ENCODE measurements at regions of chr10 and their contacts with region 1.

Region 1: GRCh38 chr10:104121520-104122224 is at the start of gene SFR1:
- DNase-seq: peak; percentile 100
- ATAC-seq: peak; percentile 89
- H3K4me3 ChIP-seq: peak within 1 kb of the TSS; percentile 73 to 100 (median 97)
- H3K4me3 Mint-ChIP-seq: peak within 1 kb of the TSS; percentile 96
- H3K27ac ChIP-seq: peak within 1 kb of the TSS; percentile 98 to 99
- H3K27ac Mint-ChIP-seq: peak within 1 kb of the TSS; percentile 99
- H3K4me1 ChIP-seq: peaks cover 10 to 13% of the 10 kb centered on the region in 2 donors
- H3K4me1 Mint-ChIP-seq: peaks cover 19% of the 10 kb centered on the region
- H3K27me3 ChIP-seq: no peaks in the 10 kb centered on the region
- H3K27me3 Mint-ChIP-seq: no peaks in the 10 kb centered on the region
- CTCF ChIP-seq: peak; percentile 70
- total RNA-seq, gene SFR1: 15.1 and 15.3 TPM in 2 replicates

Region 2: GRCh38 chr10:102917962-102918816 is 1203.5 kb before region 1 on chr10 and contains the start of gene CNNM2:
- CTCF ChIA-PET with region 1: no interaction called
- POLR2A ChIA-PET with region 1: no interaction called
- intact Hi-C with region 1: loop called (anchors 5 kb)
- DNase-seq: peak; percentile 100
- ATAC-seq: peak; percentile 90
- H3K4me3 ChIP-seq: peak within 1 kb of the TSS; percentile 60 to 95 (median 93)
- H3K4me3 Mint-ChIP-seq: peak within 1 kb of the TSS; percentile 98
- H3K27ac ChIP-seq: peak within 1 kb of the TSS; percentile 92 to 94
- H3K27ac Mint-ChIP-seq: peak within 1 kb of the TSS; percentile 96
- H3K4me1 ChIP-seq: peaks cover 31 to 33% of the 10 kb centered on the region in 2 donors
- H3K4me1 Mint-ChIP-seq: peaks cover 53% of the 10 kb centered on the region
- H3K27me3 ChIP-seq: peaks cover 0 to 12% (median 6%) of the 10 kb centered on the region in 4 experiments
- H3K27me3 Mint-ChIP-seq: peaks cover 12% of the 10 kb centered on the region
- CTCF ChIP-seq: no peak
- total RNA-seq, gene CNNM2: 20.2 and 21.6 TPM in 2 replicates

Region 3: DNA sequence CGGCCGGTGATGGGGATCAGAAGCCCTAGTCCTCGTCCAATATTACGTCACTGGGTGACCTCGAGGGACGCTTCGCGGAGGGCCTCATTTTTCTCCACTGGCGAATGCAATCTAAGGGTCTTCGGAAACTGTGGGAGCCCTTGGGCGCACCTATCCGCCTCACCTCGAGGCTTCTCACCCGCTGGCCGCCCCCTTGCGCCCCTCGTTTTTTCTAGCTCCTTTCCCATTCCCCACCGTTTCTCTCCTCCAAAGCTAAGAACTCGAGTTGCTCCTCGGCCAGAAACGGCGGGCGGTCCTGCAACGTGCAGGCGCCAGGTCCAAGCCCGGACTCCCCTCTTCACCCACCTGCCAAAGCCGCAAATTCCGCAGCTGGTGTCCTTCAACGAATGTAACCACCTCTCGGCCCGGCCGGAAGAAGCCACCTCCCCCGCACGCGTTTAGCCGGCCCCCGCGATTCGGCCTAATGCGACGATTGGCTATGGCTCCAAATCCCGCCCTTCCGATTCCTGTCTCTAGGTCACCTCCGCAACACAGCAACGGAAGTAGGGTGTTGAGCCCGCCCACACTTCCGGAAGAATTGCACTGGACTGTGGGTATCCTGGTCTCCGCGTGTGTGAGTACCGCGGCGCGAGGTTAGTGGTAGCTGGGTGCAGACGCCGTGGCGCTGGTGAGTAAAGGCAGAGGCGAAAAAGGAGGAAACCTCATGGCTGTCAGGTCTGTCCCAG is 725.4 kb before region 1 on chr10 and contains the starts of genes ATP5MK and PDCD11:
- CTCF ChIA-PET with region 1: no interaction called
- POLR2A ChIA-PET with region 1: no interaction called
- intact Hi-C with region 1: loop called (anchors 5 kb)
- DNase-seq: peak; percentile 95
- ATAC-seq: peak; percentile 98
- H3K4me3 ChIP-seq: peak within 1 kb of the TSS; percentile 68 to 92 (median 76)
- H3K4me3 Mint-ChIP-seq: peak within 1 kb of the TSS; percentile 97
- H3K27ac ChIP-seq: peak within 1 kb of the TSS; percentile 38 to 64
- H3K27ac Mint-ChIP-seq: peak within 1 kb of the TSS; percentile 89
- H3K4me1 ChIP-seq: peaks cover 22 to 23% of the 10 kb centered on the region in 2 donors
- H3K4me1 Mint-ChIP-seq: peaks cover 44% of the 10 kb centered on the region
- H3K27me3 ChIP-seq: no peaks in the 10 kb centered on the region
- H3K27me3 Mint-ChIP-seq: no peaks in the 10 kb centered on the region
- CTCF ChIP-seq: no peak
- total RNA-seq, gene ATP5MK: 96.6 and 107 TPM in 2 replicates
- total RNA-seq, gene PDCD11: 36.4 and 42.3 TPM in 2 replicates

Region 4: GRCh38 chr10:103772096-103772845 is 349.4 kb before region 1 on chr10:
- CTCF ChIA-PET with region 1: no interaction called
- POLR2A ChIA-PET with region 1: no interaction called
- intact Hi-C with region 1: no loop called
- DNase-seq: peak; percentile 60
- ATAC-seq: peak; percentile 80
- H3K4me3 ChIP-seq: peak overlapping the region; percentile 38 to 77 (median 69)
- H3K4me3 Mint-ChIP-seq: peak overlapping the region; percentile 93
- H3K27ac ChIP-seq: peak overlapping the region; percentile 34 to 35
- H3K27ac Mint-ChIP-seq: peak overlapping the region; percentile 75
- H3K4me1 ChIP-seq: peaks cover 43 to 49% of the 10 kb centered on the region in 2 donors
- H3K4me1 Mint-ChIP-seq: peaks cover 45% of the 10 kb centered on the region
- H3K27me3 ChIP-seq: peaks cover 0 to 7% (median 0%) of the 10 kb centered on the region in 4 experiments
- H3K27me3 Mint-ChIP-seq: peaks cover 6% of the 10 kb centered on the region
- CTCF ChIP-seq: no peak

Region 5: GRCh38 chr10:103888113-103888841 is 233.4 kb before region 1 on chr10:
- CTCF ChIA-PET with region 1: interaction called, 10 read pairs
- POLR2A ChIA-PET with region 1: no interaction called
- intact Hi-C with region 1: loop called (anchors 1 kb)
- DNase-seq: peak; percentile 65
- ATAC-seq: peak; percentile 76
- H3K4me3 ChIP-seq: no peak overlapping the region
- H3K4me3 Mint-ChIP-seq: no peak overlapping the region
- H3K27ac ChIP-seq: no peak overlapping the region
- H3K27ac Mint-ChIP-seq: no peak overlapping the region
- H3K4me1 ChIP-seq: no peaks in the 10 kb centered on the region
- H3K4me1 Mint-ChIP-seq: no peaks in the 10 kb centered on the region
- H3K27me3 ChIP-seq: no peaks in the 10 kb centered on the region
- H3K27me3 Mint-ChIP-seq: no peaks in the 10 kb centered on the region
- CTCF ChIP-seq: peak; percentile 88

Region 6: DNA sequence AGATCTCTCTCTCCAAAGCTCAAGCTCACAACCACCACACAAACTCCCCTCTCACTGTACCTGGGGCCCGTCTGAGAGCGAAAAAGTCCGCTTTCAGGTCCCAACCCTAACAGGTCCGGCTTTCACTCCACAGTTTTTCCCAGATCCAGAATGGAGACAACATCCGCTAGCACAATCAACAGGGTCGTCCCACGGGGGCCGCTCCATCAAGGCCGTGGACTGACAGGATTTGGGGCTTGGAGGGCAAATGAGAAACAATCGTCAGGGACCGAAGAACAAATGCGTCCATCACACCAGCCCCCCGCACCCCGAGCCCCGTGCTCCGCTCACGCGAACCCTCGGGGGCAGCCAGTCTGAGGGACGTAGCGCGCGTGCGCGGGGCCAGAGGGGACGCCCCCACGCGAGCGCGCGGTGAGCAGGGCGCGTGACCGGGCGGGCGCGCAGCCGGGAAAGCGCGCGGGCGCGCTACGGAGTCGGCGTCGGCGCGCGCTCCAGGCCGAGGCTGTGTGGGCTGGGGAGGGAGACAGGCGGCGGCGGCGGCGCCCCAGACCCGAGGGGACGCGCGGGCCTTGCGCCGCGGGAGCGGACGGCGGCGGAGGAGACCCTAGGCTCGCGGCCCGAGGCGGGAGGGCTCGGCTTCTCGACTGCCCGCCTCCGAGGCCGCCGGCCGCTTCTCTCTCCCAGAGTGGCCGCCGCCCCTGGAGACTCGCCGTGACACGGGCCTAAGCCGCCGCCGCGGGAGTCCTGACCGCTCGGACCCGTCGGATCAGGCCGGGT is 154.8 kb before region 1 on chr10 and contains the start of gene SLK:
- CTCF ChIA-PET with region 1: interaction called, 14 read pairs
- POLR2A ChIA-PET with region 1: interaction called, 12 read pairs
- intact Hi-C with region 1: loop called (anchors 1 kb)
- DNase-seq: peak; percentile 94
- ATAC-seq: peak; percentile 87
- H3K4me3 ChIP-seq: peak within 1 kb of the TSS; percentile 88 to 99 (median 95)
- H3K4me3 Mint-ChIP-seq: peak within 1 kb of the TSS; percentile 97
- H3K27ac ChIP-seq: peak within 1 kb of the TSS; percentile 81 to 88
- H3K27ac Mint-ChIP-seq: peak within 1 kb of the TSS; percentile 86
- H3K4me1 ChIP-seq: peaks cover 21 to 25% of the 10 kb centered on the region in 2 donors
- H3K4me1 Mint-ChIP-seq: peaks cover 32% of the 10 kb centered on the region
- H3K27me3 ChIP-seq: no peaks in the 10 kb centered on the region
- H3K27me3 Mint-ChIP-seq: no peaks in the 10 kb centered on the region
- CTCF ChIP-seq: no peak
- total RNA-seq, gene SLK: 22.6 and 24.5 TPM in 2 replicates

Region 7: GRCh38 chr10:104101902-104102301 is 19.8 kb before region 1 on chr10:
- CTCF ChIA-PET with region 1: no interaction called
- POLR2A ChIA-PET with region 1: no interaction called
- intact Hi-C with region 1: no loop called
- DNase-seq: no peak
- ATAC-seq: no peak
- H3K4me3 ChIP-seq: no peak overlapping the region
- H3K4me3 Mint-ChIP-seq: no peak overlapping the region
- H3K27ac ChIP-seq: no peak overlapping the region
- H3K27ac Mint-ChIP-seq: no peak overlapping the region
- H3K4me1 ChIP-seq: no peaks in the 10 kb centered on the region
- H3K4me1 Mint-ChIP-seq: no peaks in the 10 kb centered on the region
- H3K27me3 ChIP-seq: peaks cover 0 to 3% (median 0%) of the 10 kb centered on the region in 4 experiments
- H3K27me3 Mint-ChIP-seq: no peaks in the 10 kb centered on the region
- CTCF ChIP-seq: no peak

Region 8: DNA sequence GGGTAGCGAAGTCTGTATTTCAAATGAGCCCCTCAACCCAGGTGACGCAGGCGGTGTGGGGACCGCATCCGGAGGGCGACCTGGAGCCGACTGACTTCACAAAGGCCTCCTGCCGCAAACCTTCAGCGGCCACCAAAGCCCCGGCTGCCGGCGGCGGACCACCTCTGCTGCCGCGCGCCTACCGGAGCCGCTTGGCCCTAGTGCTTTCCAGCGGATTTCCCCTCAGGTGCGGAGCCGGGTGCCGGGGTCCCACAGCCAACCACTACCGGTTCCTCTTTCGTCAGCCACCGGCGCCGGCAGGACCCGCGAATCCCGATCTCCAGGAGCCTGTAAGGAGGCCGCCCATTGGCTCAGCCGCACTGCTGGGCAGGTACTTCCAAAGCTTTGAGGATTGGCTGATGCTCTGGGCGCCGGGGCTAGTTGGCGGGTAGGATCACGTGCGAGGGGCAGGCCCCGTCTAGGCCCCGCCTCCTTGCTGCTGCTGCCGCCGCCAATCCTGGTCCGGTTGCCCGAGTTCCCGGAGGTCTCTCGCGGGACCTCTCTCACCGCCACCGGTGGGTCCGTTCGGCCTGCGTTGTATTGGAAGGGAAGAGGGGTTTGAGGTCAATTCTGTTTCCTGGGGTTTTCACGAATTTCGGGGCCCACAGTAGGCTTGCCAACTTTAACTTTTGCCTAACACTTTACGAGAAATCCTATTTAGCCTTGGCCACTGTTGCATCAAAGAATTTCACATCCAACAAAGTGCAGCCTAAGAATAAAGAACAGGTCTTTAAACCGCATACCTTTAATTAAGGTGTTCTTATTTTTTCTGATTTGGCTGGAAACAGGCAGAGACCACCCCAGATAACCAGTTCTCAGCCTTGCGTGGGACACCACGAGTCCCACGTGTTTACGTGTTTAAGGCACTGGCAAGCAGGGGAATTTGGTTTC is 147.3 kb after region 1 on chr10 and contains the start of gene GSTO2:
- CTCF ChIA-PET with region 1: interaction called, 3 read pairs
- POLR2A ChIA-PET with region 1: no interaction called
- intact Hi-C with region 1: loop called (anchors 1 kb)
- DNase-seq: peak; percentile 99
- ATAC-seq: peak; percentile 97
- H3K4me3 ChIP-seq: peak within 1 kb of the TSS; percentile 68 to 90 (median 86)
- H3K4me3 Mint-ChIP-seq: peak within 1 kb of the TSS; percentile 88
- H3K27ac ChIP-seq: peak within 1 kb of the TSS; percentile 90 to 95
- H3K27ac Mint-ChIP-seq: peak within 1 kb of the TSS; percentile 92
- H3K4me1 ChIP-seq: peaks cover 20 to 22% of the 10 kb centered on the region in 2 donors
- H3K4me1 Mint-ChIP-seq: peaks cover 37% of the 10 kb centered on the region
- H3K27me3 ChIP-seq: peaks cover 0 to 1% (median under 1%) of the 10 kb centered on the region in 4 experiments
- H3K27me3 Mint-ChIP-seq: no peaks in the 10 kb centered on the region
- CTCF ChIP-seq: no peak
- total RNA-seq, gene GSTO2: 0.89 and 1.4 TPM in 2 replicates

Region 9: DNA sequence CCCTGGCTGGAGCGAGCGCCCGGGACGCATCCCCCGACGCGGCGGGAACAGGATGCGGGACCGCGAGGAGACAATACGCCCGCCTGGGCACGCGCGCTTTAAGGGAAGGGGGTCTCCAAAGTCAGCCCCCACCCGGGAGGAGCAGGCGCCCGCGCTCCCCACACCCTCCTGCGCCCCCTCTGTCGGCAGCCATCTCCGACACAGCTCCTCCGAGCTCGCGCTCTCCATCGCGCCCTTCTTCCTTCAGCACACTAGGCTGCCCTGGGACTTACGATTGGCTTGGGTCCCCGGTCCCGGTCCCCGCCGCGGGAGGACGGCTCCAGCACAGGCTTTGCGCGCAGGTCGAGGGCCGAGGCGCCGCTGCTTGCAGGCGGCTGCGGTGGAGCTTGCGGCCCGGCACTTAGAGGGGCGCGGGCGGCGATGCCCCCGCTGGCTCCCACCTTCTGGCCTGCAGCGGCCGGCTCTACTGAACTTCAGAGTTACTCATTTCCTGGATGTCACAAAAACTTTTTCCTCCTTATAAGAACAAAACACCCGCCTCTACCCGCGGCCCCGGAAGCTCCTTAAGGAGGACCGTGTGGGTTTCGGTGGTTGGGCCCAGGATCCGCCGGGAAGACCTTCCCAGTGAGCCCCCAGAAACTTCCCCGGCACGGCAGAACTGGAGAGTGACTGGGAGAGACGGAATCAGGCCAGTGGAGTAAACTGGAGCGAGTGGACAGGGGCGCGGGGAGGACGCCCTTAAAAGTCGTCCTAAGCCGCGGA is 216.5 kb after region 1 on chr10 and contains the start of gene ITPRIP:
- CTCF ChIA-PET with region 1: interaction called, 6 read pairs
- POLR2A ChIA-PET with region 1: interaction called, 3 read pairs
- intact Hi-C with region 1: loop called (anchors 5 kb)
- DNase-seq: peak; percentile 87
- ATAC-seq: peak; percentile 75
- H3K4me3 ChIP-seq: peak within 1 kb of the TSS; percentile 94 to 98 (median 97)
- H3K4me3 Mint-ChIP-seq: peak within 1 kb of the TSS; percentile 100
- H3K27ac ChIP-seq: peak within 1 kb of the TSS; percentile 80 to 83
- H3K27ac Mint-ChIP-seq: peak within 1 kb of the TSS; percentile 100
- H3K4me1 ChIP-seq: peaks cover 34 to 54% of the 10 kb centered on the region in 2 donors
- H3K4me1 Mint-ChIP-seq: peaks cover 53% of the 10 kb centered on the region
- H3K27me3 ChIP-seq: no peaks in the 10 kb centered on the region
- H3K27me3 Mint-ChIP-seq: no peaks in the 10 kb centered on the region
- CTCF ChIP-seq: no peak
- total RNA-seq, gene ITPRIP: 21.3 and 22.5 TPM in 2 replicates

Measured in B cell (primary cell).